ENCODE measurements at regions of chr2 and their contacts with region 1.

Region 1: GRCh38 chr2:163345908-163346573 is 389.8 kb downstream of the FIGN start:
- DNase-seq: peak; percentile 33
- H3K4me3 Mint-ChIP-seq: no peak overlapping the region
- H3K27ac Mint-ChIP-seq: no peak overlapping the region
- H3K4me1 Mint-ChIP-seq: peaks cover 10% of the 10 kb centered on the region
- H3K27me3 Mint-ChIP-seq: no peaks in the 10 kb centered on the region
- CTCF ChIP-seq: peak; percentile 58

Region 2: DNA sequence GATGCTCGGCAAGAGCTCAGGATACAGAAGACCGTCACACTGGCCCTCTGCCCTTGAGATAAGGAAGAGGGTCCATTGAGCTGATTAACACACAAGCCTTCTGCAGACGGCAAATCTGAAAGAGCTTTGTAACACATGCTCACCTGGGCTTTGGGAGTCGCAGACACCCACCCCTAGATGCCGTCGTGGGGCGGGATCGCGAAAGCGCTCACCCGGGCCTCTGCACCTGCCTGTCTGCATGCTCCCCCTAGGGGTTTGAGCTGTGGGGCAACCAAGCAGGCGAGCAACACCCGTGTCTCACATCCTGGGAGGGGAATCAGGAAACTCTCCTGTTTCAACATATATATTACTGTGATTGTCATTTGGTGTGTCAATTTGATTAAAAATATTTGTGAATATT is 407.7 kb before region 1 on chr2:
- CTCF ChIA-PET with region 1: no interaction called
- intact Hi-C with region 1: no loop called
- DNase-seq: no peak
- H3K4me3 Mint-ChIP-seq: no peak overlapping the region
- H3K27ac Mint-ChIP-seq: no peak overlapping the region
- H3K4me1 Mint-ChIP-seq: no peaks in the 10 kb centered on the region
- H3K27me3 Mint-ChIP-seq: no peaks in the 10 kb centered on the region
- CTCF ChIP-seq: no peak

Region 3: GRCh38 chr2:163465440-163465839 is 119.4 kb after region 1 on chr2:
- CTCF ChIA-PET with region 1: no interaction called
- intact Hi-C with region 1: loop called (anchors 10 kb)
- DNase-seq: no peak
- H3K4me3 Mint-ChIP-seq: no peak overlapping the region
- H3K27ac Mint-ChIP-seq: no peak overlapping the region
- H3K4me1 Mint-ChIP-seq: no peaks in the 10 kb centered on the region
- H3K27me3 Mint-ChIP-seq: no peaks in the 10 kb centered on the region
- CTCF ChIP-seq: no peak

Region 4: DNA sequence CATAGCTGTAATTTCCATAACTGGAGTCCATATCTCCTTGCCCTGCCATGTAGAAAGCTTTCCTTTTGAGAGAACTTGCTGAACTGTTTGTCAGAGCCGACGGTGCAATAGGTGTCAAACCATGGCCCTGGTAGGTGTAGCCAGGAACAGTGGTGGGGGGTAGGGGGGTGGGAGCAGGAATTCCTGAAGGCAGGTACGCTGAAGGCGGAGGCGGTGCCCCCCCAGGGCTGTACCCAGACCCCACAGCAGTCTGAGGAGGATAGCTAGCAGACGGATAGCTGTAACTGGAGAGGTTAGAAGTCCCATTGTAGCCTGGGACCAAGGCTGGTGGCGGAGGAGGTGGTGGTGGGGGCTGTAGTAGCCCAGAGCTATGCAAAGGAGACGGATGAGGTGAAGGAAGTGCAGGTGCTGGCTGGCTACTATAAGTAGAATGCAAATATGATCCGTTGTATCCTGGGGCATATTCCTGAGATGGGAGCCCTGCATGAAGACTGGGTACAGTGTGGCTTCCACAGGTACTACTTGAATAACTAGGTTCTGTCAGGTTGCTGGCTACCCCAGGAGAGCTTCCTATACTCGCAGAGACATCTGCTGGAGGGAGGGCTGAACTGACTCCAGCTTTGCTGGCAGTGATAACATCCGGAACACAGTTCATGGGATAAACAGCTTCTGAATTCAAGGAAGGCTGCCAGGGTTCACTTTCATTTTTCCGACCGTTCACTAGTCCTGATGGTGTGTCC is 264.9 kb after region 1 on chr2:
- CTCF ChIA-PET with region 1: no interaction called
- intact Hi-C with region 1: loop called (anchors 2 kb)
- DNase-seq: peak; percentile 43
- H3K4me3 Mint-ChIP-seq: no peak overlapping the region
- H3K27ac Mint-ChIP-seq: no peak overlapping the region
- H3K4me1 Mint-ChIP-seq: peaks cover 7% of the 10 kb centered on the region
- H3K27me3 Mint-ChIP-seq: no peaks in the 10 kb centered on the region
- CTCF ChIP-seq: no peak

Region 5: DNA sequence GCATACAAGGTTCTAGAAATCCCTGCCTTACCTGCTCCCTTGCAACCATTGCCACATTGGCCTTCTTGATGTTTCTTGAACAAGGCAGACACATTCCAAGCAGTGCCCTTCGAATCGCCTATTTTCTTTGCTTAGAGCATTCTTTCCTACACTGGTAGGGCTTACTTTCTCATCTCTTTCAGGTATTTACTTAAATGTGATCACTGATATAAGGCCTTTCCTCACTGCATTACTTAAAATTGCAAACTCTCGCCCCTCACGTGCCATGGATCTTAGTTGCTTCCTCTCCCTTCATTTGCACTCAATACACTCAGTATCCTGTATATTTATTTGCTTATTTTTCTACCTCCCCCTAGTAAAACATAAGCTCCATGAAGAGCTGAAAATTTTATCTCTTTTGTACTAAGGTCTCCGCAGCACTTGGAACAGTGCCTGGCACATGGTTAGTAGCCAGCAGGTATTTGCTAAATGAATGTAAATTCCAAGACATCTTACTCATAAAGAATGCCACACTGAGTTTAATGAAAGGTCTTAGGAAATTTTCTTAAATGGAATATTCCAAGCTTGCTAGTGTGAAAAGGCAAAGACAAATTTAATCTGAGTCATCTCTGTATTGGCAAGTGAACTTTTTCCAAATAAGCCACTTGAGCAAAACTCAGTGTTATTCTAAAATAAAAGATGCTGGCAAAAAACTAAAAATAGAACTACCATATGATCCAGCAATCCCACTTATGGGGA is 432.2 kb after region 1 on chr2:
- CTCF ChIA-PET with region 1: no interaction called
- intact Hi-C with region 1: loop called (anchors 10 kb)
- DNase-seq: peak; percentile 72
- H3K4me3 Mint-ChIP-seq: peak overlapping the region; percentile 22
- H3K27ac Mint-ChIP-seq: peak overlapping the region; percentile 85
- H3K4me1 Mint-ChIP-seq: peaks cover 74% of the 10 kb centered on the region
- H3K27me3 Mint-ChIP-seq: no peaks in the 10 kb centered on the region
- CTCF ChIP-seq: no peak

Region 6: GRCh38 chr2:164061129-164061746 is 715.2 kb after region 1 on chr2:
- CTCF ChIA-PET with region 1: interaction called, 3 read pairs
- intact Hi-C with region 1: loop called (anchors 5 kb)
- DNase-seq: peak; percentile 66
- H3K4me3 Mint-ChIP-seq: no peak overlapping the region
- H3K27ac Mint-ChIP-seq: no peak overlapping the region
- H3K4me1 Mint-ChIP-seq: no peaks in the 10 kb centered on the region
- H3K27me3 Mint-ChIP-seq: no peaks in the 10 kb centered on the region
- CTCF ChIP-seq: no peak

Region 7: DNA sequence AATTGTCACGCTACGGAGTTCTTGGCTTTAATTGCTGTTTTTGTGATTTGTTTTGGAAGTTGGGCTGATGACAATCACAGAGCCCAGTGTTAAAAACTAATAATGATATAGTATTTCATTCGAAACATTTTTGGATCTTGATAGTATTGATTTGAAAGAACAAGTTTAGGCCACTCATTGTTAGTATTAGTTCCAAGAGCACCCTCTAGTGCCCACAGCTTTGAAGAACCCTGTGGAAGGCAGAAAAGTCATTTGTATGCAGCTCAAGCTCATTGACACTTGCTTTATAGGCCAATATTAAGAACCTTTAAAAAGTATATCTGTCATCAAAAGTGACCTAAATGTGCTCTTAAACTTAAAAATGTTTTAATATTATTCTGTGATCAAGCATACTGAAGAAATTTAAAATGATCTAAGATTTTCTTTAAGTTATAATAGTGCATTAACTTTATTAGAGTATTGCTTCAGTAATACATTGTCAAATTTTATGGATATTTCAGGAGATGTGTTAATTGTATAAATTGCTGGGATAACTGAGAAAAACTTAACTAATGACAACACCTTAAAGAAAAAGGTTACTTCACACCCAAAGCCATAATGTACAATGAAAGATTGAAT is 1084.2 kb after region 1 on chr2:
- CTCF ChIA-PET with region 1: interaction called, 5 read pairs
- intact Hi-C with region 1: loop called (anchors 1 kb)
- DNase-seq: peak; percentile 51
- H3K4me3 Mint-ChIP-seq: no peak overlapping the region
- H3K27ac Mint-ChIP-seq: no peak overlapping the region
- H3K4me1 Mint-ChIP-seq: no peaks in the 10 kb centered on the region
- H3K27me3 Mint-ChIP-seq: no peaks in the 10 kb centered on the region
- CTCF ChIP-seq: peak; percentile 43

Measured in Calu3 (cell line).